AG04450 (cell line): ENCODE measurements at regions of chr6 and their contacts with region 1.

Region 1: GRCh38 chr6:124961777-124962611 is at the start of gene RNF217:
- DNase-seq: no peak
- H3K4me3 ChIP-seq: peak within 1 kb of the TSS; percentile 90
- H3K27ac ChIP-seq: peak within 1 kb of the TSS; percentile 97
- H3K27me3 ChIP-seq: no peaks in the 10 kb centered on the region
- CTCF ChIP-seq: no peak
- polyA plus RNA-seq, gene RNF217: 21.8 and 24.6 TPM in 2 replicates

Region 2: DNA sequence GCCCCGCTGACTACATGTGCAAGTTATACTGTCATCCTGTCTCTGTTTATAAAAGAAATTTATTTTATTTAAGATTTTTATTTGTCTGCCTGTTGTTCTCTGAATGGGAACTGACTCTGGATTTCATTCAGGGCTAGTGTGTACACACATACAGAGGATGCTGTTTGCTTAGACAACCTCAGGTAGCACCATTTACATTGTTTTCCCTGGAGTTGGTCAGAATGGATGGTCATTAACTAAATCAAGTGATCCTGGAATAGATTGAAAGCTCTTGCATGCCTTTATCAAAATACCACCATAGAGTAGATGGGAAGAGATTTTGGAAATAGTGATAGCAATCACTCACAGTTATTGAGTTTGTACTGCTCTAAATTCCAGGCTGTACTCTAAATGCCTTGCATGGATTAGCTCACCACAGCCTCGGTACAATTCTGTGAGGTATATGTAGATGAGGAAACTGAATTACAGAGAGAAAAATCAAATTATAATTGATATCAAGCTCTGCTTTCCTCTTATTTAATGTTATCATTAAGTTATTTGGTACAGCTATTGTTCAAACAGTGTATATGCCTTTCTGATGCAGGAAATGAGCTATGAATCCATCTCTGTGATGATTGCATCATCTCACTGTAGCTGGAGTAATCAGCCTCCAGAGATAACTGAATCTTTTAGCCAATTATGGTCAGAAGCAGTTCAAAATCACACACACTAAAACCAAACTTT is 52.1 kb after region 1 on chr6:
- CTCF ChIA-PET with region 1: interaction called, 3 read pairs
- POLR2A ChIA-PET with region 1: interaction called, 11 read pairs
- DNase-seq: peak; percentile 59
- H3K4me3 ChIP-seq: no peak overlapping the region
- H3K27ac ChIP-seq: peak overlapping the region; percentile 53
- H3K27me3 ChIP-seq: no peaks in the 10 kb centered on the region
- CTCF ChIP-seq: no peak